Calu3 (cell line): ENCODE measurements at regions of chr6 and their contacts with region 1.

Region 1: GRCh38 chr6:35583893-35584688 is 71.4 kb upstream of the TULP1 start:
- DNase-seq: peak; percentile 75
- H3K4me3 Mint-ChIP-seq: no peak overlapping the region
- H3K27ac Mint-ChIP-seq: no peak overlapping the region
- H3K4me1 Mint-ChIP-seq: no peaks in the 10 kb centered on the region
- H3K27me3 Mint-ChIP-seq: no peaks in the 10 kb centered on the region
- CTCF ChIP-seq: peak; percentile 79

Region 2: GRCh38 chr6:35522660-35523658 is 61.1 kb before region 1 on chr6:
- CTCF ChIA-PET with region 1: interaction called, 3 read pairs
- intact Hi-C with region 1: loop called (anchors 5 kb)
- DNase-seq: peak; percentile 81
- H3K4me3 Mint-ChIP-seq: peak overlapping the region; percentile 22
- H3K27ac Mint-ChIP-seq: no peak overlapping the region
- H3K4me1 Mint-ChIP-seq: no peaks in the 10 kb centered on the region
- H3K27me3 Mint-ChIP-seq: peaks cover 38% of the 10 kb centered on the region
- CTCF ChIP-seq: peak; percentile 97

Region 3: GRCh38 chr6:35624341-35625070 is 40.4 kb after region 1 on chr6:
- CTCF ChIA-PET with region 1: no interaction called
- intact Hi-C with region 1: loop called (anchors 1 kb)
- DNase-seq: no peak
- H3K4me3 Mint-ChIP-seq: no peak overlapping the region
- H3K27ac Mint-ChIP-seq: no peak overlapping the region
- H3K4me1 Mint-ChIP-seq: no peaks in the 10 kb centered on the region
- H3K27me3 Mint-ChIP-seq: no peaks in the 10 kb centered on the region
- CTCF ChIP-seq: no peak

Region 4: DNA sequence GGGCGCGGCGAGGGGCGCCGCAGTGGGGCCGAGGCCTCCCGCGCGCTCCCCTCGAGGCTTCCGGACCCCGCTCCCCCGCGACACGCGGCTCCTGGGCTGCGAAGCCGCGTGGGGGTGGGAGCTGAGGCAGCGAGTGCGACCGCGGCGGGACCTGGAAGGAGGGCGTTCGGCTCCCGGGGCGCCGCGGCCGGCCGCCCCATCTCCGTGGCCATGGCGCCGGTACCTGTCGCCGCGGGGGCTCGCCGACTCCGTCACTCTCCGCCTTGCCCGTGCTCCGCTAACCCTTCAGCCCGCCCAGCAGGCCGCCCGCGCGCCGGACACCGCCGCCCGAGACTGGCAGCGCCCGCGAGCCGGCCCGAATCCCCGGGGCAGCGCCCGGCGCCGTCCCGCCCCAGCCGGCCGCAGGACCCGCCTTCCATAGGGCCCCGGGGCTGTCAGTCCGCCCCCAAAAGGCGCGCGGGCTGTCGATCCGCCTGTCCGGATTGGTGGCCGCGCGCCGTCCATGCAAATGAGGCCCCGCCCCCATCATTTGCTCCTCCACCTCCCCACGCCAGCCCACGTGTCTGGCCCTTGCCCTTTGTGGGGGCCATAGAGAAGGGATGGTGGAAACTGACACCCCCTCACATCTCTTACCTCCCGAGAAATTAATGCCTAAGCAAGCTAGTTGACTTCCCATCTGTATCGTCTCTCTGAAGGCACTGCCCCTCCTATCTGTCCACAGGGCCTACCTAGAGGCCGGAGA is 104.7 kb after region 1 on chr6 and contains the start of gene FKBP5:
- CTCF ChIA-PET with region 1: no interaction called
- intact Hi-C with region 1: loop called (anchors 5 kb)
- DNase-seq: peak; percentile 97
- H3K4me3 Mint-ChIP-seq: peak within 1 kb of the TSS; percentile 98
- H3K27ac Mint-ChIP-seq: peak within 1 kb of the TSS; percentile 77
- H3K4me1 Mint-ChIP-seq: peaks cover 7% of the 10 kb centered on the region
- H3K27me3 Mint-ChIP-seq: no peaks in the 10 kb centered on the region
- CTCF ChIP-seq: no peak
- total RNA-seq, gene FKBP5: 14.3 and 15.1 TPM in 2 replicates